Prostate gland (tissue), 2 donors: ENCODE measurements at regions of chr1 and their contacts with region 1.

Region 1: DNA sequence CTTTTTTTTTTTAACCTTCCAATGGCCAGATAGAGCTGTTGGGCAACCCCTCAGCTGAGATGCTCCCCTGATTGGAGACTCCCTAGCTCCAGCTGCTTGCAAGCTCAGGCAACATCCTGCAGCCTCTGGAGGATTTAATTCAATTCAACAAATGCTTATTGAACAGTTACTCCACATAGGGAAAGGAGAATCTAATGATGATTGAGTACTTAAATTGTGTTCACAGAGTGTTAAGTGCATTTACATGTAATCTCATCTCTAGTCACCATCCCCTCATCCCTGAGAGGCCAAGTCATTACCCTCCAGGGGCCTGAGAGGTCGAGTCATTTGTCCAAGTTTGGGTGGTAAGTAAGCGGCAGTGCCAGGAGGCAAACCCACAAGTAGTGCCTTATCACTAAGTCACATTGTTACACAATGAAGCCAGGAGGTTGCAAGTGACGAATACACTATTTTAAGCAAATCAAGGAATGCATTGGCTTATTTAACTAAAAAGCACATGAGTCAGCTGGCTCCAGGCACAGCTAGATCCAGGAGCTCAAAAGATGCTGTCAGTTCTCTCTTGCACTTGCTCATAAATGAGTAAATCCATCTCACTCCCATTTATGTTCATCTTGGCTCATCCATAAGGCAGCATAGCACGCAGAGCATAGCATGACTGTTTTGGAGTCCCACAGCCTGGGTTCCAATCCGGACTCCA is 64.3 kb downstream of the OPTC start:
- DNase-seq: no peak
- H3K4me3 ChIP-seq: no peak overlapping the region
- H3K27ac ChIP-seq: peak overlapping the region; percentile 65 to 73
- H3K4me1 ChIP-seq: no peaks in the 10 kb centered on the region
- H3K27me3 ChIP-seq: no peaks in the 10 kb centered on the region
- CTCF ChIP-seq: no peak
- POLR2A ChIP-seq: no peak

Region 2: GRCh38 chr1:203463469-203464062 is 94.6 kb before region 1 on chr1:
- intact Hi-C with region 1: loop called (anchors 2 kb)
- DNase-seq: no peak
- H3K4me3 ChIP-seq: no peak overlapping the region
- H3K27ac ChIP-seq: peak overlapping the region; percentile 78 to 85
- H3K4me1 ChIP-seq: peaks cover 6% of the 10 kb centered on the region
- H3K27me3 ChIP-seq: no peaks in the 10 kb centered on the region
- CTCF ChIP-seq: peak in 1 of 4 experiments; percentile 41
- POLR2A ChIP-seq: no peak

Region 3: DNA sequence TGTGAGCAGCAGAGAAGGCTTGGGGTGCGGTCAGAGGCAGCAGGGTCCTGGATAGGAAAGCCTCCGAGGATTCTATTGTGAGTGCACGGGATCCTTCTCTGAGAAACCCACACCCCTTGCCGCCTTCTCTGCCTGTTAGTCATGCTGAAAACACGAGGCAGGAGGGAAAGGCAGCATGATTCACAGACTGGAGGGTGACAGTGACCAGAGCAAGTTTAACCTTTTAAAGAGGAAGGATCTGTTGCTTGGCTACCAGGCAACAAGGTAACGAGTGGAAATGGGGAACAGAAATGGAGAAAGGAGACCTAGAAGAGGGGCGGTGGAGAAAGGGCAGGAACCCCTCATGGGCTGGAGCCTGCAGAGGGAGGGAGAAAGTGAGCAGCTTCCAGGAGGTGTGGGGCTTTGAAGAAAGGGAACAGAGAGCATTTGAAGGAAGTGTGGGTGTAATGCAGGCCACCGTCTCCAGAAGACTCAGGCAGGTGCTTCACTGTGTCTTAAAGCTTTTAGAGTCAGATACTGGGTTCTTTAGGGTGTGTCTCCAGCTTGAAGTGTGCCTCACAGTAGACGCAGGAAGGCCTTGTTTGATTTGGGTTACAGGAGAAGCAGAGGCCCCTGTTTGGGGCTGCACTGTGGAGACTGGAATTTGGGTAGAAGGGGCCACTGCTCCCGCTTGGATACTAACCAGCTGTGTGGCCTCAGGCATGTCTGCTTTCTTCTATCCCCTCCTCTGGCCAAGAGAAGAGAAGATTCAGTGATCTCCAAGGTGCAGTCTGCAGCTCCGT is 45.2 kb before region 1 on chr1:
- intact Hi-C with region 1: loop called (anchors 5 kb)
- DNase-seq: peak; percentile 5
- H3K4me3 ChIP-seq: no peak overlapping the region
- H3K27ac ChIP-seq: no peak overlapping the region
- H3K4me1 ChIP-seq: no peaks in the 10 kb centered on the region
- H3K27me3 ChIP-seq: no peaks in the 10 kb centered on the region
- CTCF ChIP-seq: no peak
- POLR2A ChIP-seq: no peak